Activated naive CD4-positive, alpha-beta T cell treated with anti-CD3 and anti-CD28 coated beads for 36 hours (primary cell): ENCODE measurements at regions of chr6 and their contacts with region 1.

Region 1: DNA sequence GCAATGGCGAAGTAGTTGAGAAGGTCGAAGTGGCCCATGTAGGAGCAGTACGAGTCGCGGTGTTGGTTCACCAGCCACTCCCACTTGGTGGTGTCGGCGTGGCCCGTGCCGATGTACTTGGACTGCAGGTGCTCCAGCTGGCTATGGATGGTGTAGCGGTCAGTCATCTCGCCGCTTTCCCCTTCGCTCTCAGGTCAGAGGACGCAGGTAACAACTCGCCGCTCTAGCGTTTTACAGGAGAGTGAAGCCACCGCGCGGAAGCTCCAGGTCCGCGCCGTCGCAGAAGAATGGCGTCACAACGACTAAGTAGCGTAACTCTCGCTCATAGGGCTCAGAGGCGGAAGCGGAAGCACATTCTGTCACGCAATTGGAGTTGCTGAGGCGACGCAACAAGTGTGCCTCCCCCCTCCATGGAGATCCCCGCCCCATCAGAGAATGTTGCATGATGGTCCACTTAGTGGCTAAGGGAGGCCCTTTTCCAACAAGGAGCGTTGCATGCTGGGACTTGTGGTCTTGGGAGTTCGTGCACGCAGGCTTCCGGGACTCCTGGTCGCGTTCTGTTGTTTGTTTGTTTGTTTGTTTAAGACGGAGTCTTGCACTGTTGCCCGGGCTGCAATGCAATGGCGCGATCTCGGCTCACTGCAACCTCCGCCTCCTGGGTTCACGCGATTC is at the start of gene SF3B5:
- DNase-seq: peak; percentile 99
- H3K4me3 Mint-ChIP-seq: peak within 1 kb of the TSS; percentile 91
- H3K27ac Mint-ChIP-seq: peak within 1 kb of the TSS; percentile 91
- H3K4me1 Mint-ChIP-seq: peaks cover 29% of the 10 kb centered on the region
- H3K27me3 Mint-ChIP-seq: no peaks in the 10 kb centered on the region
- total RNA-seq, gene SF3B5: 170 to 176 TPM

Region 2: DNA sequence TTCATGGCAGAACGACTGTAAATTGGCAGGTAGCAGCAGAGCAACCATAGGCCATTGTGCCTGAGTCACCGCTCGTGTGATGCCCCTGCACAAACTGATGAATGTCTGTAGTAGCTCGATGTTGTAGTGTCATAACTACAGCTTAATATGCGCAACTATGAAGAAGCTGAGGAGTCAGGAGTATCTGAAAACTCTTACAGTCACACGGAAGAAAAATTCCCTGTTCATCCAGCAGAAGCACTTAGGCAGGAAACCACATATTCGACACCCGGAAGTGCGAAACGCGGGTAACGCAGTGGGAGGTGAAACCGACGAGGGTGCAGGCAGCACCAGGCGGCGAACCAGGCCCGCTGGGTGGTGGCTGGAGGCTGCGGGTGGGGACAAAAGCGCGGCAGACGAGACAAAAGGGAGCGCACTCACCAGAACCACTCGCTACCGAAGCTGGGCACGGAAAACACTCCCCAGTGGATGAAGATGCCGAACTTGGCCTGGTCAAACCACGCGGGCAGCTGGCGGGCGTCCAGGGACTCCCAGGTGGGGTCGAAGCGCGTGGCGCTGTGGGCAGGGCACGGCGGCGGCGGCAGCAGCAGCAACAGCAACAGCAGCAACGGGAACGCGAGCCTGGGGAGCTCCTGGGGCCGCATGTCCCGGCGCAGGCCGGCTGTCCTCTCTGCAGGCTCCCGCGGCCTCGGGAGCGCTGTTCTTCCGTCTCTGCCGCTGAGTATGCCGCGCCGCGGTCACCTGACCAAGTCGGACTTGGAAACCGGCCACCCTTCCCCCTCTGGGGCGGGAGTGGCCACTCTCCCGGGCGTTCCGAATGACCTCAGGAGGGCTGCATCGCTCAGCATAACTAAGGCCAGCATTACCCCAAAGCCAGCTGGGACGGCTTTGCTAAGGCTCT is 584.2 kb before region 1 on chr6 and contains the start of gene FUCA2:
- CTCF ChIA-PET with region 1: no interaction called
- intact Hi-C with region 1: loop called (anchors 1 kb)
- DNase-seq: peak; percentile 82
- H3K4me3 Mint-ChIP-seq: peak within 1 kb of the TSS; percentile 85
- H3K27ac Mint-ChIP-seq: peak within 1 kb of the TSS; percentile 85
- H3K4me1 Mint-ChIP-seq: peaks cover 15% of the 10 kb centered on the region
- H3K27me3 Mint-ChIP-seq: no peaks in the 10 kb centered on the region
- total RNA-seq, gene FUCA2: 7.7 to 8.2 TPM

Region 3: DNA sequence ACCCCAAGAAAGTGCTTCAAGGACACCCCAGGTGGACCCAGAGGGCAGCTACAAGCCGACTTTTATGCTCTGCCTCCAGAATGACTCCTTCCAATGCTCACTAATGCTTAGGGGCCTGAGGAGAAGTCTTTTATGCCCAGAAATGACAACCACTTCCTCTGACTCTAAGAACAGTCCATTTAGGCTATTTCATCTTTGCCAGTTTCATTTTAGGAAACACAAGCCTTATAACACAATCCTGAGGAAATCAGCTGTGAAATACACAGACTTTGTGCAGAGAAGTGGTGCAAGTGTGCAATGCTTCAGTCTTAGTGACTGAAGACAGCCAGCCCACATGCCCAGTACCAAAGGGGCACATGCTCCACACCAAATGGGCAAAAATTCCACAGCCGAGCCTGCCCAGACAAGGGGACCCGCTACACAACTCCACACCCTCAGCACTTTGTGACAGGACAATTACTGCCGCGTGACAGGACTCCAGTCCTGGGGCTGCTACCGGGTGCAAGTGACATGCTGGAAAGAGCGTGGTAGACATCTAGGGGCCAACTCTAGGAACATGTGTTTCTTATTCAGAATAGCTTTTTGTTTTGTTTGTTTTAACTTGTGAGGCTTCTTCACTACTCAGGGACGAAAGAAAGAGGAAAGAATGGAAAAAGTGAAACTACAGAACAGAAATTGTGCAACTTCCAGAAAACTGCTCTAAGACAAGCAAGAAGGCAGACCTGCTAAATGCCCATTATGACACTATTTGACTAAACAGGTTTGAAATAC is 59.2 kb before region 1 on chr6:
- CTCF ChIA-PET with region 1: no interaction called
- intact Hi-C with region 1: loop called (anchors 1 kb)
- DNase-seq: peak; percentile 50
- H3K4me3 Mint-ChIP-seq: peak overlapping the region; percentile 30
- H3K27ac Mint-ChIP-seq: no peak overlapping the region
- H3K4me1 Mint-ChIP-seq: peaks cover 14% of the 10 kb centered on the region
- H3K27me3 Mint-ChIP-seq: no peaks in the 10 kb centered on the region

Region 4: GRCh38 chr6:144131248-144131709 is 35.8 kb after region 1 on chr6:
- CTCF ChIA-PET with region 1: no interaction called
- intact Hi-C with region 1: loop called (anchors 1 kb)
- DNase-seq: no peak
- H3K4me3 Mint-ChIP-seq: peak overlapping the region; percentile 57
- H3K27ac Mint-ChIP-seq: peak overlapping the region; percentile 92
- H3K4me1 Mint-ChIP-seq: peaks cover 52% of the 10 kb centered on the region
- H3K27me3 Mint-ChIP-seq: peaks cover 3% of the 10 kb centered on the region

Region 5: GRCh38 chr6:144215932-144216667 is 120.6 kb after region 1 on chr6:
- CTCF ChIA-PET with region 1: interaction called, 46 read pairs
- intact Hi-C with region 1: loop called (anchors 1 kb)
- DNase-seq: peak; percentile 93
- H3K4me3 Mint-ChIP-seq: peak overlapping the region; percentile 79
- H3K27ac Mint-ChIP-seq: peak overlapping the region; percentile 96
- H3K4me1 Mint-ChIP-seq: peaks cover 31% of the 10 kb centered on the region
- H3K27me3 Mint-ChIP-seq: peaks cover 2% of the 10 kb centered on the region